Sigmoid colon (tissue), 7 donors: ENCODE measurements at regions of chr7 and their contacts with region 1.

Region 1: DNA sequence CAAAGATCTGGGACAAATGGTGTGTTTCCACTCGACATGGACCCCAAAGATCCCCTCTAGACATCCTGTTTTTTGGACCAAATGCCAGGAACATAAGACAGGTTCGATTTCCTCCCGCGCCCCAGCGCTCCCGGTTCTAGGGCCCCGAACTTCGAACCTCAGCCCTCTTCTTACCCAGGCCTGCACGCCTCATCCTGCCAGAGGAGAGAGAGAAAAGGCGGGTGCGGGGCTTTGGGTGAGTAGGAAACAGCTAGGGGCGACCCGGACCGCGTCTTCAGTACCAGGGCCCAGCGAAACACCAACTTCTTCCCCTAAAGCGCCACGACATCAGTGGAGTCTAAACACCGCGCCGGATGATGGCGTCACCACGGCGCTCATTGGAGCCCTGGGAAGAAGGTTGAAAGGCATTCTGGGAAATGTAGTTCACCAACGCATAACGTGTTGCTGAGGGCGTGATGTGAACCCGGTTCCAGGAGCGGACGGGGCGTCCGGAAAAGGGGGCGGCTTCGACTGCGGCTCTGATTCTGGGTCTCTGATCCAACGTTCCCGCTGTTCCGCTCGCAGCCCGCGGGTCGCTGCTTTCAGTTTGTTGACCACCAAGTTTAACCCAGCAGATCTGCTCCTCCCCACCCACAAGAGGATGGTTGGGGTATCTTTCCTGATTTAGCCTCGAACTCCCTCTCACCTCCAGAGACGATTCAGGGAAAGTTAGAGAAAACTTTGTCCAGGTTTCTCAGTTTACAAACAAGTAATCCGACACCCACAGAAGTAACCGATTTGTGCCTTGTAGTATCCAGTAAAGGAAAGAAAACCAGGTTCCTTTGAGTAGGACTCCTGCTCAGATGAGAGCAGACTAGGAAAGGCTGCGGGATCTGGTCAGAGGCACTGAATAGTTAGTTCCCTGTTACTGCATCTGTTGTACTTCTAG is at the start of gene BET1:
- DNase-seq: peak; percentile 97
- H3K4me3 ChIP-seq: peak within 1 kb of the TSS; percentile 66 to 82 (median 76)
- H3K27ac ChIP-seq: peak within 1 kb of the TSS; percentile 83 to 90 (median 87)
- H3K4me1 ChIP-seq: peaks cover 0 to 23% (median 9%) of the 10 kb centered on the region in 4 donors
- H3K27me3 ChIP-seq: no peaks in the 10 kb centered on the region
- CTCF ChIP-seq: no peak
- EP300 ChIP-seq: no peak
- POLR2A ChIP-seq: peak in 1 of 2 donors; percentile 52
- total RNA-seq, gene BET1: 21.3 to 31.0 (median 26.0) TPM

Region 2: DNA sequence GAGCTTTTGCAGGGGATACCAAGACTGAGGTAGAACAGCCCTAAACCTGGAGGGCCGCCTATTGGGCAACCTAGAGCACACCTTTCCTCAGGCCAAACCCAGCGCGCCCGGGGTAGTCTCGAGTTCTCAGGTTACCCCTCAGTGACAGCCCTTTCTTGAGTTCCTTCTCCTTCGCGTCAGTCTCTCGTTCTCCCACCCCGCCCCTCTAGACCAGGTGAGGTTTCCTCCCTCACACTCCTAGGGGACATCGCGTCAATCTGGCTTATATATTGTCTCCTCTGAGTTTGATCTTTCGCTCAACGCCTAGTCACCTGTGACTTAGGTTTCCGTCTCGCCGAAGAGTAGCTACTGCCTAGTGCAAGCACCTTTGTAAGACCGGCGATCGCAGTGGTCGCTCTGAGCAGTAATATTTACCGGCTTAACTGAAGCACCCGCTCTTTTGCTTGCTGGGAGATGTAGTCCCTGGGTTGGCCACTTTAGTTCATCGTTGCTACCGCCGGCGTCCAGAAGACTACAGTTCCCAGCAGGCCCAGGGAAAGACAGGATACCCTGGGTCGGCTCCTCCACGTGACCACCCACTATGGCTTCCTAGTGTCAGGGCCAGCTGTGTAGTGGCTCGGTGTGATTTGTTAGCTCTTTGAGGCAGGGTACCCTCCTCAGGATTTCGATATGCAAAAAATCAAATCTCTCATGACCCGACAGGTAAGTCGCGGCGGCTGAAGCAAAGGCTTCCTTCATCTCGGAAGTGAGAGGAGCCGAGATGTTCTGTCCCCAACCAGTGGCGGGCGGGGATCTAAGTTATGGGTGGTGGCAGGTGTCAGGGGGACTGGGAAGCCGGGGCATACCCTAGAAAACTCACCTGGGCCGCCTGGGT is 772.3 kb before region 1 on chr7 and contains the start of gene VPS50:
- intact Hi-C with region 1: loop called (anchors 10 kb)
- DNase-seq: peak; percentile 97
- H3K4me3 ChIP-seq: peak within 1 kb of the TSS; percentile 64 to 75 (median 68)
- H3K27ac ChIP-seq: peak within 1 kb of the TSS; percentile 59 to 73 (median 64)
- H3K4me1 ChIP-seq: peaks cover 0 to 20% (median 13%) of the 10 kb centered on the region in 4 donors
- H3K27me3 ChIP-seq: no peaks in the 10 kb centered on the region
- CTCF ChIP-seq: peak in 1 of 4 experiments; percentile 28
- EP300 ChIP-seq: no peak
- POLR2A ChIP-seq: no peak
- total RNA-seq, gene VPS50: 21.7 to 36.4 (median 26.4) TPM

Region 3: DNA sequence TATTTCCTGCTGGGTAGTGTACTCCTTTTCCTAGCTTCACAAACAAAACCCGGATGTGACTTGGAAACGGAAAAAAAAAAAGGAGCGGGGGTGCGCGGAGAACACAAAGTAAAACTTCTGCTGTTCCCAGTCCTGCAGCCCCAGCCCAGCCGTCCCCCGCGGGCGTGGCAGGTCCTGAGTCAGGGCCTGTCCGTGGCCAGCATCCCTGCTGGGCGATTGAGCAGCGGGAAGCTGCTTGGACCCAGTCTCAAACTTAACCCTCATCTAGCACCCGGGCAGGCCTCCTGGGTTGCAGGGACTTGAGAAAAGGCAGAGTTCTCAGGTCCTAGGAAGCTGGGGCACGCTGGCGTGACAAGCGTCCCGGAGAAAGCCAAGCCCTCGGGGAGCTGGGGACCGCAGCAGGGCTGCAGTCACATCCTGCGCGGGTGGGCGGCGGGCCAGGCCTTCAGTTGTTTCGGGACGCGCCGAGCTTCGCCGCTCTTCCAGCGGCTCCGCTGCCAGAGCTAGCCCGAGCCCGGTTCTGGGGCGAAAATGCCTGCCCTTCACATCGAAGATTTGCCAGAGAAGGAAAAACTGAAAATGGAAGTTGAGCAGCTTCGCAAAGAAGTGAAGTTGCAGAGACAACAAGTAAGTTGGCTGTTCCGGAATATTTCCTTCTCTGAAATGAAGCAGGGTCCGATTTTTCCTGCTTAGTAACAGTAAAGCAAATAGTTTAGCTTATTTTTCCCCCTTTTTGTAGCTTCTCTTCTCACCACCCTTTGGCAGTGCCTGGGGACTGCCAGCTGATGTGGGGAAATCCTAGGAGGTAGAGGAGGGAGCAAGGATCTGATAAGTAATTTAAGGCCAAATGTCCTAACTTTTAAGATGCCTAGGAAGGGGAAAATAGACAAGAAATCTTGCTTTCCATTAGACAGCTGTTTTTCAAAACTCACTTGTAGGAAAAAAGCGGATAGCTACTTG is 82.4 kb before region 1 on chr7 and contains the start of gene GNG11:
- intact Hi-C with region 1: loop called (anchors 5 kb)
- DNase-seq: peak; percentile 91
- H3K4me3 ChIP-seq: peak within 1 kb of the TSS; percentile 49 to 74 (median 63)
- H3K27ac ChIP-seq: peak within 1 kb of the TSS; percentile 85 to 92 (median 88)
- H3K4me1 ChIP-seq: peaks cover 0 to 48% (median 16%) of the 10 kb centered on the region in 4 donors
- H3K27me3 ChIP-seq: no peaks in the 10 kb centered on the region
- CTCF ChIP-seq: no peak
- EP300 ChIP-seq: no peak
- POLR2A ChIP-seq: peak in 1 of 2 donors; percentile 19
- total RNA-seq, gene GNG11: 12.9 to 26.8 (median 18.9) TPM

Region 4: DNA sequence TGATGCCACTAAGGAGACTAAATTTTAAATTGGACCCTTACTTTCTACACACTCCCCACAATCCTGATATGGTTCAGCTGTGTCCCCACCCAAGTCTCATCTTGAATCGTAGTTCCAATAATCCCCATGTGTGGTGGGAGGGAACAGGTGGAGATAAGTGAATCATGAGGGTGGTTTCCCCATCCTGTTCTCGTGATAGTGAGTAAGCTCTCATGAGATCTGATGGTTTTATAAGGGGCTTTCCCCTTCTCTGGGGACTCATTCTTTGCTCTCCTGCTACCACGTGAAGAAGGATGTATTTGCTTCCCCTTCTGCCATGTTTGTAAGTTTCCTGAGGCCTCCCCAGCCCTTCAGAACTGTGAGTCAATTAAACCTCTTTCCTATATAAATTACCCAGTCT is 18.3 kb after region 1 on chr7:
- intact Hi-C with region 1: no loop called
- DNase-seq: no peak
- H3K4me3 ChIP-seq: no peak overlapping the region
- H3K27ac ChIP-seq: no peak overlapping the region
- H3K4me1 ChIP-seq: no peaks in the 10 kb centered on the region
- H3K27me3 ChIP-seq: no peaks in the 10 kb centered on the region
- CTCF ChIP-seq: no peak
- EP300 ChIP-seq: no peak
- POLR2A ChIP-seq: no peak